H1 (cell line): ENCODE measurements at regions of chr5 and their contacts with region 1.

Region 1: DNA sequence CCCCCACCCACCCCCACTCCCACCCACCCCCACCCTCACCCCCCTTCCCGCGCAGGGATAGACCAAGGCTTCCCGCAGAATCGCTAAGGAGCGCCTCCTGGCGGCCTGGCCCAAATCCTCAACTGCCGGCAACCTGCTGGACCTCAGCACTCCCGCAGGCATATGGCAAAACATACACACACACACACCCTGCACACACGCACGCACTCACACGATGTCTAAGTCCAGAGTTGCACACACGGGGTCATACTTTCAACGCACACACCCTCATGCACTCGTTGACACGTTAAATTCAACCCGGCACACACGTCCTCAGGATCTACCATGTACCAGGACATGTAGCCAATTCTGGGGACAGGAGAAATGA is 1.7 kb downstream of the CPLX2 start:
- DNase-seq: peak in 1 of 2 experiments; percentile 92
- H3K4me3 ChIP-seq: peak overlapping the region in 2 of 4 experiments; percentile 38; a peak in 4 of 8 replicates
- H3K27ac ChIP-seq: no peak overlapping the region
- H3K4me1 ChIP-seq: peaks cover 6 to 14% (median 8%) of the 10 kb centered on the region in 4 experiments
- H3K27me3 ChIP-seq: peaks cover 0 to 19% (median 6%) of the 10 kb centered on the region in 4 experiments; a peak in 3 of 7 replicates
- CTCF ChIP-seq: peak; percentile 69 to 84 (median 77)
- EP300 ChIP-seq: no peak
- POLR2A ChIP-seq: no peak
- RAD21 ChIP-seq: peak; percentile 50 to 56

Region 2: DNA sequence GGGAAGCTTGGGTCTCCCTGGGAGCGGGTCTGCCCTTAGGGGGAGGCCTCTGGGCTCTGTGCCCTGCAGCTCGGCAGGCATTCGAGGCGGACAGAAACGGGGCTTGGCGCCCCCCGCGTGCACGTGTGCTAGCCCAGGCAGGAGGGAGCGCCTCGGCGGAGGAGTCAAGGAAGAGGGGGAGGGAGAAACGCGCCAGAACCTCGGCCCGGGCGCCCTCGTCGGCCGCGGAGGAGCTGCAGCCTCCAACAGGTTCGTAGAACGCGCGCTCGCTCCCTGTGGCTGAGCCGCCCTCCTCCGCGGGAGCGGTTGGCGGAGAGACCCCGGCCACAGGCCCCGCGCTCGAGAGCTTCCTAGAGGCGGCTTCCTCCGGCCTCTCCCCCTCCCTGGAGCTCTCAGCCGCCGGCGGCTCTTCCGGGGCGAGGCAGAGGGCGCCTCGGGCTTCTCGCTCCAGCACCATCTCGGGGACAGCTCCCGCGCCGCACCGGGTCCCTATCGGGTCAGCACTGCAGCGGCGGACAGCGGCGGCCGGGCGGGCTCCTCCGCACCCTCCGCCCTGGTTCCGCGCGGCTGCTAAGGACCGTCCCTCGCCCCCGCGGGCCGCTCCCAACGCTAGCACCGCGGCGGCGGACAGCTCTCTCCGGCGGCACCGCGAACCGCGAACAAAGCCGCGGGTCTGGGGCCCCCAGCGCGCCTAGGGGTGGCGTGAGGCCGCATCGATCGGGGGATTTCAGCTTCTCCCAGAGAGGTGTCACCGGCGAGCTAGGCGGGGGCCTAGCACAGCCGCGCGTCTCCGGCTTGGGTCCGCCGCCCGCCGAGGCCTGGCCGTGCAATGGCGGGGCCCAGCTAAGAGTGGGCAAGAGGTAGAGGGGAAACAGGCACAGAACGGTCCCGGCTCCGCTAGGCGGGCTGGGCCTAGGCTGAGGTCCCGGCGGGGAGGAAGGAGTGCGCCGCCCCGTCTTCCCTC is 76.3 kb before region 1 on chr5:
- CTCF ChIA-PET with region 1: interaction called, 57 read pairs
- POLR2A ChIA-PET with region 1: interaction called, 4 read pairs
- DNase-seq: peak; percentile 56 to 95
- H3K4me3 ChIP-seq: peak overlapping the region; percentile 24 to 78 (median 60)
- H3K27ac ChIP-seq: no peak overlapping the region
- H3K4me1 ChIP-seq: peaks cover 2 to 12% (median 9%) of the 10 kb centered on the region in 4 experiments; a peak in 5 of 7 replicates
- H3K27me3 ChIP-seq: peaks cover 4 to 12% (median 8%) of the 10 kb centered on the region in 4 experiments; a peak in 6 of 7 replicates
- CTCF ChIP-seq: no peak
- EP300 ChIP-seq: peak in 1 of 2 experiments; percentile 91; a peak in 2 of 3 replicates
- POLR2A ChIP-seq: no peak
- RAD21 ChIP-seq: peak in 1 of 2 experiments; percentile 20; a peak in 1 of 4 replicates

Region 3: DNA sequence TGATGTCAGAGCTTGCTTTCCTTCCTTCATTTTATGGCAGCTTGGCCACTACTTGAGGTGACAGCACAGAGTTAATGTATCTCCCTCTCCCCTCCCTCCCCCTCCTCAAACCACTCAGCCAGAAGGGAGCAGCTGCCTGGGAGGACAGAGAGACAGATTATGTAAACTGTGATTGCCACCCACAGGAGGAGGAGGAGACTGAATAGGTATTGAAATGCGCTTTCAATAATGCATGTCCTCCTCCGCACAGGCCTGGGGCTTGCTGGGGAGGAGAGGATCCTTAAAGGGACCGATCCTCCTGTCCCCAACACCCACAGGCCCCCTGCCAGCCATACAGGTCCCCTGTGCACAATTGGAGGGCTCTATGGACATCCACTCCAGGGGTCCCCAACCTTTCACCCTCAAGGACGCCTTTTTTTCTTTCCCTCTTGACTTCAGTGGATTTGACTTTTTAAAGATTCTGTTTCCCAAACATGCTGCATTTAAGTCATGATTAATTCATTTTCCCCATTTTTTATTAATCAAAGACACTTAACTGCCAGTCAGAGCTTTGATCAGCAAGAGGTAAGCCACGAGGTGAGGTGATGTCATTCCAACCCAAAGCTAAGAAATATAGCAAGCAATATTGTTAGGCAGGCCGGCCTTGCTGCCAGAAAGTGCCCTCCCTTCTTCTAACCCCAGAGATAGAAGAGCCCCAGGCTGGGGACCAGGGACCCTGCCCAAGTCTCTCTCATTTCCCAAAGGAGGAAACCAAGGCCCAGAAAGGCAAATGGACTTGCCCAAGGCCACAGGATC is 49.1 kb before region 1 on chr5:
- CTCF ChIA-PET with region 1: interaction called, 6 read pairs
- POLR2A ChIA-PET with region 1: interaction called, 11 read pairs
- DNase-seq: no peak
- H3K4me3 ChIP-seq: no peak overlapping the region; a peak in 1 of 8 replicates
- H3K27ac ChIP-seq: no peak overlapping the region
- H3K4me1 ChIP-seq: peaks cover 2 to 16% (median 15%) of the 10 kb centered on the region in 4 experiments
- H3K27me3 ChIP-seq: no peaks in the 10 kb centered on the region
- CTCF ChIP-seq: no peak; a peak in 1 of 4 replicates
- EP300 ChIP-seq: no peak
- POLR2A ChIP-seq: no peak
- RAD21 ChIP-seq: peak; percentile 24 to 33; a peak in 3 of 4 replicates

Region 4: GRCh38 chr5:175853573-175854230 is 19.4 kb before region 1 on chr5:
- CTCF ChIA-PET with region 1: interaction called, 33 read pairs
- POLR2A ChIA-PET with region 1: interaction called, 8 read pairs
- DNase-seq: no peak
- H3K4me3 ChIP-seq: no peak overlapping the region
- H3K27ac ChIP-seq: no peak overlapping the region
- H3K4me1 ChIP-seq: peaks cover 0 to 6% (median 1%) of the 10 kb centered on the region in 4 experiments; a peak in 4 of 7 replicates
- H3K27me3 ChIP-seq: no peaks in the 10 kb centered on the region
- CTCF ChIP-seq: no peak
- EP300 ChIP-seq: no peak
- POLR2A ChIP-seq: no peak
- RAD21 ChIP-seq: no peak

Region 5: DNA sequence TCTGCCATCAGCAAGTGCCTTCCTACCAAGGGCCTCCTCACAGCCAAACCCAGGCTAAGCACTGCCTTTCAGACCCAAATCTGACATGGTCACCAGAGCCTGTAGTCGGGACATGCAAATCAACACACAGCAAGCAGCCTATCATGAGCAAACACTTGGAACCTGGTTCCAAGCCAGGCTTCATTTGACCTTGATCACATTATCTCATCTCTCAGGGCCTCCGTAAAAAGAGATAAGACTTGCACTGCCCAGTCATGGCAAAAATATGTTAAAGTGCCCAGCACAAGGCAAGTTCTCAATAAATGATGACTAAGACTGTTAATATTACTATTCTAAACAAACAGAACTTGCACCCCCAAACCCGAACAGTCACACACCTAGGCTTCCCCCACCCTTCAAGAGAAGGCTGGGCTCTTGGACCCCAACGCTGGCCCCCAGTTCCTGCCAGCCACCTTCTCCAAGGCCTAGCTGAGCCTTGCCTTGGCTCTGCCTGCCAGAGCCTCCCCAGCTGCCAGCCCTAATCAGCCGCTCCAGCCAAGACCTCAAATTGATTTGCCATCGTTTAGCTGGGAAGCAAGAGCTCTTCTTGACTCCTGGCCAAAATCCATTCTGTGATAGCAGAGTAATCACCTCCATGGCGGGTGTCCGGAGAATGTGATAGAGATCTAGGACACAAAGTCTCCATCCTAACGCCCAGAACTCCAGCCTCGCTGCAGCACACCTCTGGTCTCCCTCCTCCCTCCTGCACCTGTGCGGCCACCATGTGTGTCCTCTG is 17.0 kb after region 1 on chr5:
- CTCF ChIA-PET with region 1: interaction called, 71 read pairs
- POLR2A ChIA-PET with region 1: interaction called, 3 read pairs
- DNase-seq: no peak
- H3K4me3 ChIP-seq: no peak overlapping the region
- H3K27ac ChIP-seq: no peak overlapping the region
- H3K4me1 ChIP-seq: peaks cover 0 to 6% (median 3%) of the 10 kb centered on the region in 4 experiments; a peak in 5 of 7 replicates
- H3K27me3 ChIP-seq: no peaks in the 10 kb centered on the region
- CTCF ChIP-seq: no peak
- EP300 ChIP-seq: no peak
- POLR2A ChIP-seq: no peak
- RAD21 ChIP-seq: no peak

Region 6: GRCh38 chr5:175902026-175902425 is 29.0 kb after region 1 on chr5:
- CTCF ChIA-PET with region 1: no interaction called
- POLR2A ChIA-PET with region 1: no interaction called
- DNase-seq: no peak
- H3K4me3 ChIP-seq: no peak overlapping the region
- H3K27ac ChIP-seq: no peak overlapping the region
- H3K4me1 ChIP-seq: no peaks in the 10 kb centered on the region; a peak in 1 of 7 replicates
- H3K27me3 ChIP-seq: no peaks in the 10 kb centered on the region
- CTCF ChIP-seq: no peak
- EP300 ChIP-seq: no peak
- POLR2A ChIP-seq: no peak
- RAD21 ChIP-seq: no peak